ENCODE measurements at regions of chr16 and their contacts with region 1.

Region 1: DNA sequence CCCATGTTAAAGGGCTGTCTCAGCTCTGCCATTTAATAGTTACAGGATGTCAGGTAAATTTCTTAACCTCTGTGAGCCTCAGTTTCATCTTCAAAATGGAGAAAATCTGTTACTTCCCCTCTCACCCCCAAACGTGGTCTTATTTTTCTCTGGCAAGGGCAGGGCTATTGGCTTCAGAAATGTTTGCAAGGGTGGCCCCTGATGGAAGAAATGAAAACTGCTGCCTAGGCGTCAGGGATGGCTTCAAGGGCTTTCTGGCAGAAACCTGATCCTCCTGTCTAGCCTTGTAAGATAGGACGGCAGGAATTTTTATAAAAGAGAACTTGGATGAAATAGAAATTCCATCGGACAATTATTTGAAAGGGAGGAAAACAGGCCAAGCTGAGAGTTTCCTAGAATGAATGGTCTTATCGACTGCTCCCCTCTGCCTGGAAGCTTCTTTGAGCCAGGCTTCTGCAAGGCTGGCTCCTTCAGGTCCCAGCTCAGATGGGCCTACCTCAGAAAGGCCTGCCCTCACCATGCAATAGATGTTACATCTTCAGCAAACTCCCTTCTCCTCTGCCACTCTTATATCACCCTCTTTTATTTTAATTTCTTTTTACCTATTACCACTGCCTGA is 43.0 kb upstream of the TANGO6 start:
- DNase-seq: peak in 8 of 9 donors; percentile 7 to 48 (median 28)
- ATAC-seq: peak; percentile 65
- H3K4me3 ChIP-seq: no peak overlapping the region
- H3K4me3 Mint-ChIP-seq: no peak overlapping the region
- H3K27ac ChIP-seq: no peak overlapping the region
- H3K27ac Mint-ChIP-seq: peak overlapping the region in 1 of 9 donors; percentile 39
- H3K4me1 ChIP-seq: no peaks in the 10 kb centered on the region
- H3K4me1 Mint-ChIP-seq: peaks cover 0 to 3% (median 0%) of the 10 kb centered on the region in 7 donors
- H3K27me3 ChIP-seq: no peaks in the 10 kb centered on the region
- H3K27me3 Mint-ChIP-seq: peaks cover 0 to 1% (median 0%) of the 10 kb centered on the region in 5 donors

Region 2: DNA sequence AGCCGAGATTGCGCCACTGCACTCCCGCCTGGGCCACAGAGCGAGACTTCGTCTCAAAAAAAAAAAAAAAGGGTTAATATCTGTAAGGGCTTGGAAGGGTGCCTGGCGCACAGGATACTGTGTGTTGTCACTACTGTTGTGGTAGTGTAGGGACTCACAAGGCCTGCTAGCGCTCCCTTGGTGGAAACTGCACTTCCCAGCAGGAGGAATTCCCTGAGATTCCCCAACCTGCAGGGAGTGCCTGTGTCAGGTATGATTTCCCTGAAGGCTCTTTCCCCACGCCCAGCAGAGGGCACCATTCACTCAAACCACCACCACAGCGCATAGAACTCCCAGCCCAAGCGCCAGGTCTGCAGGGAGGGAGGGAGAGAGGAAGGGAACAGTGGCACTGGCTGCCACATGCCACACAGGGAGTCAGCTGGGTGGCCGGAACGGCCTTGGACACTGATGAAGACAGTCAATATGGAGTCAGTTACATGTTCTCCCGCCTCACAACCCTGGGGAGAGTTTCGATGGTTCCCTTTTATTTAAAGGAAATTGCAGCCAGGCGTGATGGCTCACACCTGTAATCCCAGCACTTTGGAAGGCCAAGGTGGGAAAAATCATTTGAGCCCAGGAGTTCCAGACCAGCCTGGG is 96.0 kb before region 1 on chr16:
- CTCF ChIA-PET with region 1: no interaction called
- POLR2A ChIA-PET with region 1: no interaction called
- intact Hi-C with region 1: loop called (anchors 1 kb)
- DNase-seq: peak in 8 of 9 donors; percentile 9 to 66 (median 31)
- ATAC-seq: peak; percentile 72
- H3K4me3 ChIP-seq: no peak overlapping the region
- H3K4me3 Mint-ChIP-seq: no peak overlapping the region
- H3K27ac ChIP-seq: no peak overlapping the region
- H3K27ac Mint-ChIP-seq: no peak overlapping the region
- H3K4me1 ChIP-seq: no peaks in the 10 kb centered on the region
- H3K4me1 Mint-ChIP-seq: peaks cover 0 to 4% (median 0%) of the 10 kb centered on the region in 7 donors
- H3K27me3 ChIP-seq: no peaks in the 10 kb centered on the region
- H3K27me3 Mint-ChIP-seq: no peaks in the 10 kb centered on the region

Region 3: GRCh38 chr16:68811503-68811902 is 11.1 kb after region 1 on chr16:
- CTCF ChIA-PET with region 1: interaction called, 11 read pairs
- POLR2A ChIA-PET with region 1: no interaction called
- intact Hi-C with region 1: no loop called
- DNase-seq: no peak
- ATAC-seq: no peak
- H3K4me3 ChIP-seq: no peak overlapping the region
- H3K4me3 Mint-ChIP-seq: no peak overlapping the region
- H3K27ac ChIP-seq: no peak overlapping the region
- H3K27ac Mint-ChIP-seq: no peak overlapping the region
- H3K4me1 ChIP-seq: no peaks in the 10 kb centered on the region
- H3K4me1 Mint-ChIP-seq: no peaks in the 10 kb centered on the region
- H3K27me3 ChIP-seq: no peaks in the 10 kb centered on the region
- H3K27me3 Mint-ChIP-seq: peaks cover 0 to 6% (median 0%) of the 10 kb centered on the region in 5 donors

Region 4: DNA sequence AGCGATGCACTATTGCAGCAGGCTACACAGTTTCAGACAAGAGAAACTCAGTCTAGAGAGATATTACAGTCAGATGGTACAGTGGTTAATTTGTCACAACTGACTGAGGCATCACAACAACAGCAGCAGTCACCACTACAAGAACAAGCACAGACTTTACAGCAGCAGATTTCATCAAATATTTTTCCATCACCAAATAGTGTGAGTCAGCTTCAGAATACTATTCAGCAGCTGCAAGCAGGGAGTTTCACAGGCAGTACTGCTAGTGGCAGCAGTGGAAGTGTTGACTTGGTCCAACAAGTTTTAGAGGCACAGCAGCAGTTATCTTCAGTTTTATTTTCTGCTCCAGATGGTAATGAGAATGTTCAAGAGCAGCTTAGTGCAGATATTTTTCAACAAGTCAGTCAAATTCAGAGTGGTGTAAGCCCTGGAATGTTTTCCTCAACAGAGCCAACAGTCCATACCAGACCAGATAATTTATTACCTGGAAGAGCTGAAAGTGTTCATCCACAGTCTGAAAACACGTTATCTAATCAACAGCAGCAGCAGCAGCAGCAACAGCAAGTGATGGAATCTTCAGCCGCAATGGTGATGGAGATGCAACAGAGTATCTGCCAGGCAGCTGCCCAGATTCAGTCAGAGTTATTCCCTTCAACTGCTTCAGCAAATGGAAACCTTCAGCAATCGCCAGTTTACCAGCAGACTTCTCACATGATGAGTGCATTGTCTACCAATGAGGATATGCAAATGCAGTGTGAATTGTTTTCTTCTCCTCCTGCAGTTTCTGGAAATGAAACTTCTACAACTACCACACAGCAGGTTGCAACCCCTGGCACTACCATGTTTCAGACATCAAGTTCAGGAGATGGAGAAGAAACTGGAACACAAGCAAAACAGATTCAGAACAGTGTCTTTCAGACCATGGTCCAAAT is 891.9 kb after region 1 on chr16:
- CTCF ChIA-PET with region 1: no interaction called
- POLR2A ChIA-PET with region 1: no interaction called
- intact Hi-C with region 1: no loop called
- DNase-seq: no peak
- ATAC-seq: no peak
- H3K4me3 ChIP-seq: no peak overlapping the region
- H3K4me3 Mint-ChIP-seq: no peak overlapping the region
- H3K27ac ChIP-seq: no peak overlapping the region
- H3K27ac Mint-ChIP-seq: peak overlapping the region in 3 of 9 donors; percentile 13 to 66 (median 44)
- H3K4me1 ChIP-seq: no peaks in the 10 kb centered on the region
- H3K4me1 Mint-ChIP-seq: peaks cover 0 to 17% (median 0%) of the 10 kb centered on the region in 7 donors
- H3K27me3 ChIP-seq: no peaks in the 10 kb centered on the region
- H3K27me3 Mint-ChIP-seq: no peaks in the 10 kb centered on the region

Measured in naive thymus-derived CD4-positive, alpha-beta T cell (primary cell).